Caco-2 (cell line): ENCODE measurements at regions of chr16 and their contacts with region 1.

Region 1: DNA sequence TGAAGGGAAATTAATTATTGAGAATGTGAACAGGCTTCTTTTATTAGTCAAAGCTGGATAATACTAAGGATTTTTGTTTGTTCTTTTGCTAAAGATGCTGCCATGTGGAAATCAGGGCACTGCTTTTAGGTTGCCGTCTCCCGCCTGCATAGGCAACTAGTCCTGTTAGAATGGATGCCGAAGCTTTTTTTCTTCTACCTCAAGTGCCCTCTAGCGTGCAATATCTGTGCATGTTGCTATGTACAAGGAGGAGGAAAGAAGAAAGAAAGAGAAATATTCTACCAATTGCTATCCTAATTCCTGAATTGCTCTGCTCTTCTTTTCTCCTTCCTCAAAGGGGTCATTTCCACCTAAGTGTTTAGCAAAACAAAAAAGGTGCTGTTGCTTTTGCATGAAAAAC is 5.2 kb upstream of the CDH8 start:
- DNase-seq: peak; percentile 48 to 51
- H3K4me3 ChIP-seq: no peak overlapping the region
- H3K4me3 Mint-ChIP-seq: no peak overlapping the region
- H3K27ac Mint-ChIP-seq: no peak overlapping the region
- H3K4me1 ChIP-seq: no peaks in the 10 kb centered on the region; the same call in 1 of the 2 replicates
- H3K4me1 Mint-ChIP-seq: peaks cover 20% of the 10 kb centered on the region
- H3K27me3 ChIP-seq: no peaks in the 10 kb centered on the region
- H3K27me3 Mint-ChIP-seq: no peaks in the 10 kb centered on the region
- CTCF ChIP-seq: peak; percentile 54 to 78

Region 2: GRCh38 chr16:61936522-61936921 is 104.9 kb before region 1 on chr16:
- CTCF ChIA-PET with region 1: interaction called, 3 read pairs
- POLR2A ChIA-PET with region 1: no interaction called
- intact Hi-C with region 1: loop called (anchors 1 kb)
- DNase-seq: peak in 1 of 2 experiments; percentile 26
- H3K4me3 ChIP-seq: no peak overlapping the region
- H3K4me3 Mint-ChIP-seq: no peak overlapping the region
- H3K27ac Mint-ChIP-seq: no peak overlapping the region
- H3K4me1 ChIP-seq: peaks cover 11% of the 10 kb centered on the region
- H3K4me1 Mint-ChIP-seq: peaks cover 2% of the 10 kb centered on the region
- H3K27me3 ChIP-seq: no peaks in the 10 kb centered on the region
- H3K27me3 Mint-ChIP-seq: no peaks in the 10 kb centered on the region
- CTCF ChIP-seq: peak; percentile 53 to 62